MCF 10A (cell line): ENCODE measurements at regions of chr7 and their contacts with region 1.

Region 1: DNA sequence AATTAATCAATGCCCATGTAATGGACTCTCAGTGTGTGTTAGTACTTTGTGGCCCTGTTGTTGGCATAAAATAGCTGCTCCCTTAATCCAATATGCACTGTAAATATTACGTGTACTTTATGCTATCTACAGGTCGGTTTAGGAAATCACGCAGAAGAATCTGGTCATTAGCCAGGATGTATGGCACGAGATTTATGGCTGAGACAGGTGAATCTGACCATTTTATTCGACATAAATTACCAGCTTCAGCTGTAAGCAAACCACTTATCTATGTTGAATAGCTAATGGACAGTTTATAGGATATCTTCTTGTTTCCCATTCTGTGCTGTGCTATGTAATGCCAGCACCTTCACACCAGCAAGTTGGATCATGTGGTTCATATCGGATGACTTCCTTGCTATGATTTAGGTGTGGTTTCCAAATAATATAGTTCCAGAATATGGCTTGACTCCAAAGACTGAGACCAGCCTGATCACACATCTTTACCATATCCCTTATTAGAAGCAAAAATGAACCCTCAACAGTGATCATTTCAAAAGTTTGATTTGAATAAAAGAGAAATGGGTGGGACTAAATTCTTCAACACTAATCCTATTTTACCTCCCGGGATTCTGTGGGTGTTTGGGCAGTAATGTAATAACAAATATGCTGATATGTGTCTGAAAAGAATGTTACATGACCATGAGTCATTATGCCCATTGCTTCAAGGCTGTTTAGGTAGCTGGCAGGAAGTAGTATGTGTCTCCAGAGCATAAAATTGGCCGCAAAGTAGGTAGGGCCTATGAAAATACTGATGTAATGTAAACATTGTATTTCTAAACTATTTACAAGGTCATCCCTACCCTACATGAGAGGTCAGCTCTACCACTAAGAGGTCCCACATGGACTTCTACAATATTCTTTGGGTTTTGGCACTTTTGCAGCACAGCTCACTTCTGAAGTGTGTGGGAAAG is 301.6 kb downstream of the AHR start:
- DNase-seq: peak; percentile 96
- H3K4me3 Mint-ChIP-seq: peak overlapping the region; percentile 56
- H3K27ac Mint-ChIP-seq: peak overlapping the region; percentile 91
- H3K4me1 Mint-ChIP-seq: peaks cover 29% of the 10 kb centered on the region
- H3K27me3 Mint-ChIP-seq: no peaks in the 10 kb centered on the region
- CTCF ChIP-seq: no peak

Region 2: DNA sequence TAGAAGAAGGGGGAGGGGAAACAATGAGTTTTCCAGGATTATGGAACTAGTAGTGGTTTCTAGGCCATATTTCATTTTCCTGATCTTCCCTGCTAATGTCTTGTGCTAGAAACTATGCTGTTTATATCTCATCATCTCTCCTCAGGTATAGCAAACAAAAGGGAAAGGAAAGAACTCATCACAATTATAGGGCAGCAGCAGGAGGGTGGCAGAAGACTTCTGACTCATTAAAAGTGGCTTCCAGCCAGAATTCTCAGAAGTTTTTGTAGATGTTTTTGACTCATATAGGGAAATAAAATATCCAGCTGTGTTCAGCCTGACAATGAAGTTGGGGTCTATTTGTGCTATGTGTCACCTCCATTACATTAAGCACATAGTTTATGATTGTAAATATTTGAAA is 295.1 kb before region 1 on chr7:
- CTCF ChIA-PET with region 1: interaction called, 6 read pairs
- POLR2A ChIA-PET with region 1: interaction called, 22 read pairs
- intact Hi-C with region 1: no loop called
- DNase-seq: peak; percentile 94
- H3K4me3 Mint-ChIP-seq: peak overlapping the region; percentile 70
- H3K27ac Mint-ChIP-seq: peak overlapping the region; percentile 85
- H3K4me1 Mint-ChIP-seq: peaks cover 23% of the 10 kb centered on the region
- H3K27me3 Mint-ChIP-seq: no peaks in the 10 kb centered on the region
- CTCF ChIP-seq: no peak

Region 3: DNA sequence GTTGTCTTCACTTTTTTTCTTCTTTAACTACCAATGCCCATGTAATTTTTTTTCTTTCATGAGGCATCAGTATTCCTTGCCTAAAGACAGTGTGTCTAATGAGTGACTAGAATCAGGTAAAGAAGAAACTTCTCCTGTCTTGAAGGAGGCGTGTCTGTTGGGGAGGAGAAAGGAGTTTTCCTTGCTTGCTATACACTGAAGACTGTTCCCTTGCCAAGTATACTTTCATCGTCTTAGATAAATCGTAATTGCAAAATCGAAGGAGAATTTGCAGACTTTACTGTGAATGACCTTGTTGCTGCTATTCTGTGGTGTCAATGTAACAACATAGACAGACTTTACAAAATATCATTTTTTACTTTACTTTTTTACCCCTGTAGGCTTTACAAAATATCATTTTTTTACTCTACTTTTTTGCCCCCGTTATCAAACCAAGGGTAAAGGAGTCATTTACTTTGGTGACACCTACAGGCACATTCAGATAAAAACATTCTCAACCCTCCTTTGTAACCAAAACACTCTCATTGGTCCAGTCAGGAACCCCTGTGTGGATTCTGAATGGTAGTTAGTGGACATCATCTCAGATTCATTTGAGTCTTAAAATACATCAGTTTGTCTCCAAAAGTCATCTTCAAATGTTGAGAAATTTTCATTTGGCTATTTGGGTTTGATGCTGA is 69.1 kb before region 1 on chr7:
- CTCF ChIA-PET with region 1: interaction called, 3 read pairs
- POLR2A ChIA-PET with region 1: interaction called, 7 read pairs
- intact Hi-C with region 1: loop called (anchors 1 kb)
- DNase-seq: peak; percentile 44
- H3K4me3 Mint-ChIP-seq: no peak overlapping the region
- H3K27ac Mint-ChIP-seq: peak overlapping the region; percentile 52
- H3K4me1 Mint-ChIP-seq: peaks cover 45% of the 10 kb centered on the region
- H3K27me3 Mint-ChIP-seq: no peaks in the 10 kb centered on the region
- CTCF ChIP-seq: peak; percentile 17

Region 4: GRCh38 chr7:17559388-17559787 is 40.6 kb before region 1 on chr7:
- CTCF ChIA-PET with region 1: no interaction called
- POLR2A ChIA-PET with region 1: interaction called, 51 read pairs
- intact Hi-C with region 1: no loop called
- DNase-seq: no peak
- H3K4me3 Mint-ChIP-seq: no peak overlapping the region
- H3K27ac Mint-ChIP-seq: peak overlapping the region; percentile 94
- H3K4me1 Mint-ChIP-seq: peaks cover 35% of the 10 kb centered on the region
- H3K27me3 Mint-ChIP-seq: no peaks in the 10 kb centered on the region
- CTCF ChIP-seq: no peak

Region 5: GRCh38 chr7:17640730-17641377 is 40.8 kb after region 1 on chr7:
- CTCF ChIA-PET with region 1: interaction called, 6 read pairs
- POLR2A ChIA-PET with region 1: interaction called, 25 read pairs
- intact Hi-C with region 1: loop called (anchors 2 kb)
- DNase-seq: peak; percentile 66
- H3K4me3 Mint-ChIP-seq: no peak overlapping the region
- H3K27ac Mint-ChIP-seq: no peak overlapping the region
- H3K4me1 Mint-ChIP-seq: peaks cover 19% of the 10 kb centered on the region
- H3K27me3 Mint-ChIP-seq: no peaks in the 10 kb centered on the region
- CTCF ChIP-seq: peak; percentile 48

Region 6: GRCh38 chr7:17690030-17690429 is 90.0 kb after region 1 on chr7:
- CTCF ChIA-PET with region 1: no interaction called
- POLR2A ChIA-PET with region 1: interaction called, 6 read pairs
- intact Hi-C with region 1: loop called (anchors 10 kb)
- DNase-seq: peak; percentile 95
- H3K4me3 Mint-ChIP-seq: no peak overlapping the region
- H3K27ac Mint-ChIP-seq: peak overlapping the region; percentile 89
- H3K4me1 Mint-ChIP-seq: peaks cover 12% of the 10 kb centered on the region
- H3K27me3 Mint-ChIP-seq: no peaks in the 10 kb centered on the region
- CTCF ChIP-seq: no peak